ENCODE measurements at regions of chr2 and their contacts with region 1.

Region 1: GRCh38 chr2:233033672-233034071 is 1.2 kb downstream of the NEU2 start:
- DNase-seq: no peak
- H3K4me3 ChIP-seq: no peak overlapping the region
- H3K27ac ChIP-seq: no peak overlapping the region
- H3K4me1 ChIP-seq: peaks cover 0 to 5% (median 0%) of the 10 kb centered on the region in 3 donors
- H3K27me3 ChIP-seq: no peaks in the 10 kb centered on the region
- CTCF ChIP-seq: no peak
- POLR2A ChIP-seq: no peak

Region 2: GRCh38 chr2:232772531-232772930 is 261.1 kb before region 1 on chr2:
- intact Hi-C with region 1: no loop called
- DNase-seq: no peak
- H3K4me3 ChIP-seq: no peak overlapping the region
- H3K27ac ChIP-seq: no peak overlapping the region
- H3K4me1 ChIP-seq: no peaks in the 10 kb centered on the region
- H3K27me3 ChIP-seq: no peaks in the 10 kb centered on the region
- CTCF ChIP-seq: no peak
- POLR2A ChIP-seq: no peak

Region 3: DNA sequence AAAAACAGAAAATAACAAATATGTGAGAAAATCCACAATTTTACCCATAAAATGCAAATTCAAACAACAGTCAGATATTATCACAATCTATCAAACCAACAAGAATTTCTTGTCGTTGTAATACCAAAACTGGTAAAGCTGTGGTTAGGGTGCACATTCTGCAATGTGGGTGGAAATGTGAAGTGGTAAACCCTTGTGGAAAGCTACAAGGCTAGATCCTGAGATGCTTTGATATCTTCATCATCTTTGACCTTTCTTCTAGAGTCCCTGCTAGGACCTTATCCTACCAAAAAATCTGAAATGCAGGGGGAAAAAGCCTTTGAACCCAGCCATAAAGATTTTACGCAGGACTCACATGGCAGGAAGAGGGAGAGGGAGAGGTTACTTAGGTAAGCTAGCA is 200.6 kb after region 1 on chr2:
- intact Hi-C with region 1: loop called (anchors 10 kb)
- DNase-seq: no peak
- H3K4me3 ChIP-seq: no peak overlapping the region
- H3K27ac ChIP-seq: no peak overlapping the region
- H3K4me1 ChIP-seq: no peaks in the 10 kb centered on the region
- H3K27me3 ChIP-seq: no peaks in the 10 kb centered on the region
- CTCF ChIP-seq: no peak
- POLR2A ChIP-seq: no peak